RWPE1 (cell line): ENCODE measurements at regions of chr16 and their contacts with region 1.

Region 1: DNA sequence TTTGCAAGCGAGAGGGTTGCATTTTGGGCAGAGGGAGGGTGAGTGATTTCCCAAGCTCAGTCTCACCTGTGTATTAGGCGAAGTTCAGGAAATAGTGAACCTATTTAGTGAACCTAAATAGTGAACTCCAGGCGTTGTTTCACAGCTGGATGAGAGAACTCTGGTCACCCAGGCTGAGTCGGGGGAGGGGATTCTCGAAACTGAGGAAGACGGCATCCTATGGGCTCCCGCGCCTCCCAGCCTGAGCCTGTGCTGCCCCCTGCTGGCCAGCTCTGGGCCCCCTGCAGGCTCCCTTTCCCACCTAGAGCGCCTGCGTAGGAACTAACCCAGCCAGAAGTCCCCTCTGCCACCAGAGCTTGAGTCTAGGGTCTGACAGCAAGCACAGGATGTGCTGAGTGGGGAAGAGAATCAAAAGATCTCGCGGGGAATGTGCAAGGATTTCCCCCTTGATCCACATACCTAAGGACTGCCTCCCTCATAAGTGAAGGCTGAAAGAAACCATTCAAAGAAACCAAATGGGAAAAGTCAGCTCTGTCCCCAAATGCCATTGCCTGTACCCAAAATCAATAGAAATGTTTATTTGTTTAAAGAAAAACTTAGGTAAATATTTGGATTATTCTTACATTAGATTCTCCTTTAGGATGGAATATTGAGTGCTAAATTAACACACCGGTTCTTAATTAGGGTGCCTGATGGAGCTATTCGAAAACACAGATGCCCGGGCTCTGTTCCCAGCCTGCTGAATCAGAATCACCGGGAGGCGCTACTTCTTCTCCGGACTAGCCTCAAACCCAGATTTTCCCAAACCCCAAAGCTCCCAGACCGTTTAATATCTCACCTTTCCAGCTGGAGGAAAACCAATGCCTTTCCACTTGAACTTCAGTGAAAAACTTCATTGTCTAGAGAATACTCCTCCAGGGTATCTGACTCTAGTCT is 14.8 kb upstream of the MARVELD3 start:
- DNase-seq: peak; percentile 67
- H3K27ac ChIP-seq: no peak overlapping the region
- CTCF ChIP-seq: peak; percentile 75

Region 2: DNA sequence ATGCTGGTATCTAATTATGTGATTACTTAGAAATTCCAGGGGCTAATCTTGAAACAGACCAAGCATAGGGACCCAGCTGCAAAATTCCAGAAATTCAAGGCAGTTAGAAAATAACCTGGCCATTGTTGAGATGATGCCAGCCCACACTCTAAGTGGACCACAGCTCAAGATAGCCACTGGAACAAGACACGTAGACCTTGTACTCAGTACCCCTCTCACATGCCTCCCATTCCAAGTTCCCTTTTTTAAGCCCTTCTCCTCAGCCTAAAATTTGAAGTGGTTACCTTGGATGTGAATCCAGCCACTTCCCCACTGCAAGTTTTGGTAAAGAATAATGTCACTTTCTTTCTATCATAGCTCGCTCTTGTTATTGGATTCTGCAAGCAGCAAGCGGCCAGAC is 118.0 kb before region 1 on chr16:
- CTCF ChIA-PET with region 1: no interaction called
- POLR2A ChIA-PET with region 1: no interaction called
- DNase-seq: no peak
- H3K27ac ChIP-seq: no peak overlapping the region
- CTCF ChIP-seq: no peak

Region 3: DNA sequence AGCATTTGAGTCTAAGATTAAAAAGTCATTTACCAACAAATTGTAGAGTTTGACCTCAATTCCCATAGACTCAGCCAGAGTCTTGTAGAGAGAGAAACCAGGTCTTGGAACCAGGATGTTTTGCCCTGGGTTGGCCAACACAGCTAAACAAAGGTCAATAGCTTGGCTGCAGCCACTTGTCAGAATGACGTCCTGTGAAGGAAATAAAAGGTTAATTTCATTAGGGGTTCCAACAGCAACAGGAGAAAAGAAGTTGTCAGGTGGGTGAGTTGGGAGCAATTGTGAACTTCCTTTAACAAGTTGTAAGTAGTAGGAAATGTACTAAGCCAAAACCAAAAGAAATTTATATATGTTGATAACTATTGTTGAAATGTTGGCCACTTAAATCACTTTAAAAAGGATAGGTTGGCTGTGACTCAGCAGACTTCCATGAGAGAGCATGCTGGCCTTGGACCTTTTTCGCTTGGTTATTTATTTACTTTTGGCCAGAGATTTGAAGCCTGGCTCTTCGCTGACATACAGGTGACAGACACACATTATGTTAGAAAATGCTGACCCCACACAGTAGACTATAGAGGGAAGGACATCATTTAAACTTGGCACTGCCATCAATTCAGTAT is 38.6 kb before region 1 on chr16:
- CTCF ChIA-PET with region 1: interaction called, 10 read pairs
- POLR2A ChIA-PET with region 1: no interaction called
- DNase-seq: no peak
- H3K27ac ChIP-seq: no peak overlapping the region
- CTCF ChIP-seq: no peak

Region 4: GRCh38 chr16:71630805-71631204 is 19.6 kb after region 1 on chr16:
- CTCF ChIA-PET with region 1: interaction called, 11 read pairs
- POLR2A ChIA-PET with region 1: no interaction called
- DNase-seq: peak; percentile 46
- H3K27ac ChIP-seq: no peak overlapping the region
- CTCF ChIP-seq: no peak